Sciatic nerve (tissue), 2 donors: ENCODE measurements at regions of chr1 and their contacts with region 1.

Region 1: GRCh38 chr1:1779706-1780597 is 1.7 kb upstream of the NADK start:
- DNase-seq: no peak
- ATAC-seq: peak; percentile 48

Region 2: GRCh38 chr1:1540090-1540817 is 239.7 kb before region 1 on chr1 and contains the start of gene TMEM240:
- intact Hi-C with region 1: no loop called
- DNase-seq: peak; percentile 92
- ATAC-seq: peak; percentile 85
- total RNA-seq, gene TMEM240: 7.1 TPM

Region 3: DNA sequence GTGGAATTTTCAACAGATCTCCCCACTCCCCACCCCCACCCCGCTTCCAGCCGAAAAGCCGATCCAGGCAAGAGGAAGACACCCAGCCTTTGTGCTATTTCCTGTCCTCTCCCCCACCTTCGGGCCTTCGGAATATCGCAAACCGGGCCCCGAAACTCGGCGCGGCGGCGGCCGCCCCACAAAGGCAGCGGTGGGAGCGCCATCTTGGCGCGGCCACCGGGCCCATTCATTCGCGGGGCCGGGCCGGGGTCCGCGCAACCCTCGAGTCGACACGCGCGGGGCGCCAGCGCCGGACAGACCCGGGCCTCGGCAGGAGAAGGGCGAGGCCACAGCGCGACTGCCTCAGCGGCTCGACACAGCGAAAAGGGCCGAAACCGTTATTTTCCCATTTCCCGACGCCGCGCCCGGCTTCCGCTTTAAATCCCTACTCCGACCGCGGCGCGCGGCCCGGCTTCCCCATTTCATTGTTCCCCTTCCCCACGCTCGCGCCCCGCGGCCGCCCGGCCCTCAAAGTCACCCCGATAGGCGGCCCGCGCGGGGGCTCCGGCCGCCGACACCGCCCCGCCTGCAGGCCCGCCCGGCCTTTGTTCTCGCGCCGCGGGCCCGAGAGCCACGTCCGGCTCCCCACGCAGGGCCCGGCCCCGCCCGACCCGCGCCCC is 110.0 kb after region 1 on chr1:
- intact Hi-C with region 1: loop called (anchors 10 kb)
- DNase-seq: peak; percentile 82
- ATAC-seq: no peak